Right ventricle myocardium inferior (tissue), 1 donor: ENCODE measurements at regions of chr13 and their contacts with region 1.

Region 1: DNA sequence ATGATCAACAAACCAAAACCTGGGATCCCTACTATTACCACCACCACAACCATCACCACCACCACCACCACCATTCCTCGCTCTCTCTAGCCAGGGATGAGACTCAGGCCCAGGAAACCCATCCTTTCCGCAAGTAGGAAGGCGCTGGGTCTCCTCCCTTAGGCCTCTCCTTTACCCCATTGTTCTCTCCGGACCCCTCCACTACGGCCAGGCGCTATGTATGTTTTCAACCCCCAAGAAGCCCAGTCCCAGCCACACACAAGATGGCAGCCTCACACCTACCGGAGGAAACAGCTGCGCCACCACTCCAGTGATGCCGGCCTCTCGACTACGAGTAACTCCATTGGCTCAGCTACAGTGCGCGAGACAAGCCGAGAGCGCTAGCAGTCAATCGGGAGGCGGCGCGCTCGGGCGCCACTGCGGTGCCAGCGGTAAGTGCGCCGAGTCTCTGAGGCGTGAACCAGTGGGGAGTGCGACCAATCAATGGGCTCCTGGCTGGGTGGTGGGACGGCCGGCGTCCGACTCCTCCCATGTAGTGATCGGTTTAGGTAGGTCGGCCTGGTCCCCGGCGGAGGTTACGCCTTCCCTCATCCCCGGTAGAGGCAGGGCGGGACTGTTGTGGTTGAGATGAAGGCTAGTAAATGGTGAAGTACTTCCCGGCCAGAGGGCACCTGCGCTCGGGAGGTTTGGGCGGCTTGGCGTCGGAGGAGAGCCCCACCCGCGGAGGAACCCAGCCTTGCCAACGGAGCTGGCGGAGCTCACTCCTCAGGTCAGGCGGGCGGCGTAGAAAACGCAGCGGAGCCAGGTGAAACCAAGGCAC is at the starts of genes CAB39L and SETDB2:
- DNase-seq: peak; percentile 100
- ATAC-seq: peak; percentile 99
- total RNA-seq, gene CAB39L: 22.1 TPM
- total RNA-seq, gene SETDB2: 13.1 TPM

Region 2: GRCh38 chr13:49585220-49586157 is 141.6 kb after region 1 on chr13 and contains the start of gene RCBTB1:
- intact Hi-C with region 1: no loop called
- DNase-seq: peak; percentile 88
- ATAC-seq: peak; percentile 98
- total RNA-seq, gene RCBTB1: 22.3 TPM

Region 3: GRCh38 chr13:49606747-49607648 is 163.1 kb after region 1 on chr13:
- intact Hi-C with region 1: loop called (anchors 5 kb)
- DNase-seq: peak; percentile 93
- ATAC-seq: peak; percentile 92